ENCODE measurements at regions of chr15 and their contacts with region 1.

Region 1: GRCh38 chr15:52208306-52208946 is 17.2 kb upstream of the GNB5 start:
- DNase-seq: peak; percentile 44
- ATAC-seq: peak; percentile 99
- H3K4me3 Mint-ChIP-seq: no peak overlapping the region
- H3K27ac Mint-ChIP-seq: no peak overlapping the region
- H3K4me1 Mint-ChIP-seq: no peaks in the 10 kb centered on the region
- H3K27me3 Mint-ChIP-seq: no peaks in the 10 kb centered on the region
- CTCF ChIP-seq: no peak

Region 2: GRCh38 chr15:52057996-52058395 is 150.4 kb before region 1 on chr15:
- CTCF ChIA-PET with region 1: no interaction called
- POLR2A ChIA-PET with region 1: no interaction called
- intact Hi-C with region 1: loop called (anchors 5 kb)
- DNase-seq: no peak
- ATAC-seq: no peak
- H3K4me3 Mint-ChIP-seq: no peak overlapping the region
- H3K27ac Mint-ChIP-seq: no peak overlapping the region
- H3K4me1 Mint-ChIP-seq: no peaks in the 10 kb centered on the region
- H3K27me3 Mint-ChIP-seq: no peaks in the 10 kb centered on the region
- CTCF ChIP-seq: no peak

Region 3: GRCh38 chr15:52163321-52164190 is 44.9 kb before region 1 on chr15:
- CTCF ChIA-PET with region 1: interaction called, 8 read pairs
- POLR2A ChIA-PET with region 1: no interaction called
- intact Hi-C with region 1: loop called (anchors 1 kb)
- DNase-seq: no peak
- ATAC-seq: peak; percentile 37
- H3K4me3 Mint-ChIP-seq: no peak overlapping the region
- H3K27ac Mint-ChIP-seq: no peak overlapping the region
- H3K4me1 Mint-ChIP-seq: peaks cover 37% of the 10 kb centered on the region
- H3K27me3 Mint-ChIP-seq: no peaks in the 10 kb centered on the region
- CTCF ChIP-seq: no peak

Region 4: GRCh38 chr15:52480990-52481389 is 272.6 kb after region 1 on chr15:
- CTCF ChIA-PET with region 1: no interaction called
- POLR2A ChIA-PET with region 1: no interaction called
- intact Hi-C with region 1: no loop called
- DNase-seq: no peak
- ATAC-seq: no peak
- H3K4me3 Mint-ChIP-seq: no peak overlapping the region
- H3K27ac Mint-ChIP-seq: no peak overlapping the region
- H3K4me1 Mint-ChIP-seq: peaks cover 51% of the 10 kb centered on the region
- H3K27me3 Mint-ChIP-seq: no peaks in the 10 kb centered on the region
- CTCF ChIP-seq: no peak